ENCODE measurements at regions of chr3 and their contacts with region 1.

Region 1: GRCh38 chr3:5122030-5122740 is at the start of gene ARL8B:
- DNase-seq: peak; percentile 93
- H3K4me3 ChIP-seq: peak within 1 kb of the TSS; percentile 87 to 97 (median 90)
- H3K27ac ChIP-seq: peak within 1 kb of the TSS; percentile 89 to 93 (median 92)
- H3K4me1 ChIP-seq: peaks cover 12 to 45% (median 19%) of the 10 kb centered on the region in 4 donors
- H3K27me3 ChIP-seq: no peaks in the 10 kb centered on the region
- CTCF ChIP-seq: peak; percentile 89 to 98 (median 96)
- EP300 ChIP-seq: no peak
- POLR2A ChIP-seq: peak; percentile 77
- total RNA-seq, gene ARL8B: 13.1 to 47.2 (median 31.9) TPM

Region 2: DNA sequence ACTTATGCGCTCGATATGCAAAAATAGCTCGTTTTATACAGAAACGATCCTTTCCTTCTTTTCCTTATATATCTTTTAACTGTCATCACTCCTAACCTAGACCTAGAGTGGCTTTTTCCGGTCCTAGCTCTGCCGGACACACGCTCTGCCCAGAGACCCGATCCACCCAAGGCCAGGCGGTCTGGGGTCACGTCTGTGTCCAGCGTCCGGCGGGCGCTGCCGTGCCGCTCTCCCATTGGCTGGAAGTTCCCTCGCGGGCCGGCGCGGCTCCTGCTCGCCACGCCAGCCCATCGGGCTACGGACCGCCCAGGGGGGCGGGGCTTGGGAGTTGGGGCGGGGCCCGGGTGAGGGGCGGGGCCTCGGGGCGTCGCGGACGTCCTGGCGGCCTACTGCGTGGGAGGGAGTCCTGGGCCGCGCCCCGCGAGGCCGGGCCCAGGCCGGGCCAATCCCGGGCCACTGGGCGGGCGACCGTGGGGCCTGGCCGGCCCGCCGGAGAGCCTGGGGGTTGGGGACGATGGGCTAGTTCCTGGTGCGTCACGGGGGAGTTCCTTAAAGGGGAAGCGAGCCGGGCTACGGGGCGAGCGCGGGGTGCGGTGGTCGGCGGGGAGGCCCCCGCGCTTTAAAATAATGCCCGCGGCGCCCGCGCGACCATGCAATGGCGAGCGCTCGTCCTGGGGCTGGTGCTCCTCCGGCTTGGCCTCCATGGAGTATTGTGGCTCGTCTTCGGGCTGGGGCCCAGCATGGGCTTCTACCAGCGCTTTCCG is 65.2 kb after region 1 on chr3 and contains the start of gene EDEM1:
- in situ Hi-C with region 1: no loop called
- intact Hi-C with region 1: loop called (anchors 5 kb)
- DNase-seq: peak; percentile 97
- H3K4me3 ChIP-seq: peak within 1 kb of the TSS; percentile 96 to 100 (median 98)
- H3K27ac ChIP-seq: peak within 1 kb of the TSS; percentile 98 to 100 (median 98)
- H3K4me1 ChIP-seq: peaks cover 10 to 51% (median 16%) of the 10 kb centered on the region in 4 donors
- H3K27me3 ChIP-seq: no peaks in the 10 kb centered on the region
- CTCF ChIP-seq: no peak
- EP300 ChIP-seq: no peak
- POLR2A ChIP-seq: peak; percentile 84
- total RNA-seq, gene EDEM1: 27.3 to 312 (median 42.3) TPM

Region 3: DNA sequence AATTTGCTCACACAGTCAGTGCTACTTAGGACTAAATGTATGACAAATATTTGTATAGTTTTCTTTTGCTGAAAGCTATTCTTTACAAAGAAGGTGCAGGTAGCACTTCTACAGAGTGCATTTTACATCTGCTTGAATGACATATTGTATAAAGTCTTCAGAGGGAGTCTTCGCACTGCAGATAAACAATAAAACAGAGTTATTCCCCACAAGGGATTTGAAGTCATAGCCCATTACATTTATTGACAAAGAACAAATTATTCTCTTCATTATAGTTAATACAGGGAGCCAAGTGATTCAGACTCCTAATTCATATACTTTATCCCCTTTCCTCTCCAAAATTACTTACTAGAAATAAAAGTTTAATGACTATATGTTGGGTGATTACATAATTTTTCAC is 595.1 kb after region 1 on chr3:
- in situ Hi-C with region 1: no loop called
- intact Hi-C with region 1: no loop called
- DNase-seq: no peak
- H3K4me3 ChIP-seq: no peak overlapping the region
- H3K27ac ChIP-seq: no peak overlapping the region
- H3K4me1 ChIP-seq: no peaks in the 10 kb centered on the region
- H3K27me3 ChIP-seq: no peaks in the 10 kb centered on the region
- CTCF ChIP-seq: no peak
- EP300 ChIP-seq: no peak
- POLR2A ChIP-seq: no peak